Pancreas (tissue), 10 donors: ENCODE measurements at regions of chr12 and their contacts with region 1.

Region 1: GRCh38 chr12:15230751-15231150 is 9.5 kb upstream of the RERG start:
- DNase-seq: no peak
- ATAC-seq: no peak
- H3K4me3 ChIP-seq: no peak overlapping the region
- H3K27ac ChIP-seq: no peak overlapping the region
- H3K4me1 ChIP-seq: no peaks in the 10 kb centered on the region
- H3K27me3 ChIP-seq: no peaks in the 10 kb centered on the region
- CTCF ChIP-seq: no peak

Region 2: DNA sequence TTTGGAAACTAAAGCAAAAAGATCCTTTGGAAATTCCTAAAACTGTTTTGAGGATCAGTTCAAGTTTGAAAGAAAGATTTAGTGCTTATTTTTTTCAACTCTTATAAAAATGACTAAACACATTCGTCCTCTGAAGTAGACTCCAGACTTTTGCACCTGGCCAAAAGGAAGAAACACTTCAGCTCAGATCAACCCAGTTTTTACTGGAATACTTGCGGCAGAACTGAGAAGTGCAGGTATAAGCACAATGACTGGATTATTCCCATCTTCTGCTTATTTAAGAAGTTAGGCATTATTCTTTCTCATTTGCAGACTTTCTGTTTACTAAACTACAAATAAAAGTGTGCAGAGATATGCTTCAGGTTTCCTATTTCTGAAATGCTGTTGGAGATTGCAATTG is 216.0 kb before region 1 on chr12:
- intact Hi-C with region 1: loop called in 1 of 3 experiments (anchors 5 kb)
- DNase-seq: no peak
- ATAC-seq: peak in 1 of 4 donors; percentile 47
- H3K4me3 ChIP-seq: no peak overlapping the region
- H3K27ac ChIP-seq: peak overlapping the region in 1 of 4 donors; percentile 7
- H3K4me1 ChIP-seq: no peaks in the 10 kb centered on the region
- H3K27me3 ChIP-seq: no peaks in the 10 kb centered on the region
- CTCF ChIP-seq: no peak